ENCODE measurements at regions of chr14 and their contacts with region 1.

Region 1: DNA sequence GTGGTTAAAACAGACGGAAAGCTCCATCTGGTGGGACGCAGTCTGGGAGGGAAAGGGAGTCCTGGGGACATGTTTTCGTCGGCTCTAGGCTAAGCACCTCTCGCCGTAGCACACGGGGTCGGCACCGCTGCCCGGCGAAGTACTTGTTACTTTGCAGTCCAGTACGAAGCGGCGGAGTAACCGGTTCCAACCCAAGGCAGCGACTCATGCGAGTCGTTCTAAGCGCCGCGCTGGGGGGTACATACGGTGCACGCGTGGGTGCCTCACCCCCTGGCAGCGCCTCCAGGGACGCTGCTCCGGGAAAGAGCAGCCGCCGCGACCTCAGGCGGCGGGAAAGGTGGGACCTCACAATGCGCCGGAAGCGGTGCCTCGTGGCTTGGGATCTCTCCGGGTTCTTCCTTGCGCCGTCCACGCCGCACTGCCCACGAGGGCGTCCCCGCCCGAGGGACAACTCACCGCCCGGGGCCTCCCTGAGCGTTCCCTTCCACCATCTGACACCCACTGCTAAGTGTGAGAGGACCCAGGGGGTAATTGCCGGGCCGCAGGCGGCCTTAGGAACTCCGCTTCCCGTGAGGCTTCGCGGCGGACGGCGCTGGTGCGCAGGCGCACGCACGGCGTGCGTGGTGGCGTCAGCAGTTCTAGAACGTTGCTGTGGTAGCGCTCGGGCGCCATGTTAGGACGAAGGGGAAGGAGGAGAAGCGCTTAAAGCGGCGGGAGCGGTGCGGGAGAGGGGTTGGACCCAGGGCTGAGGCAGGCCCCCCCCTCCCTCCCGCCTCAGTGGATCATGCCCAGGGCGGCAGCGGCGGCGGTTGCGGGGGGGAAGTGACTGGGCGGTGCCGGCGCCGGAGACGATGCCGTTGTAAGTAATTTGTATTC is at the start of gene PAPOLA:
- DNase-seq: peak; percentile 88 to 94
- ATAC-seq: peak; percentile 94
- H3K4me3 ChIP-seq: peak within 1 kb of the TSS; percentile 91 to 99 (median 98)
- H3K27ac ChIP-seq: peak within 1 kb of the TSS; percentile 97 to 99 (median 98)
- H3K4me1 ChIP-seq: peaks cover 39 to 44% of the 10 kb centered on the region in 2 donors
- H3K27me3 ChIP-seq: no peaks in the 10 kb centered on the region
- CTCF ChIP-seq: peak in 3 of 5 experiments; percentile 5 to 37 (median 23)
- POLR2A ChIP-seq: peak; percentile 75 to 87
- total RNA-seq, gene PAPOLA: 41.5 to 66.4 (median 50.7) TPM

Region 2: GRCh38 chr14:96391293-96392118 is 110.5 kb before region 1 on chr14:
- in situ Hi-C with region 1: no loop called
- intact Hi-C with region 1: loop called (anchors 2 kb)
- DNase-seq: peak; percentile 96
- ATAC-seq: peak; percentile 90 to 92
- H3K4me3 ChIP-seq: peak overlapping the region; percentile 73 to 98 (median 87)
- H3K27ac ChIP-seq: peak overlapping the region; percentile 62 to 70 (median 66)
- H3K4me1 ChIP-seq: peaks cover 0 to 11% of the 10 kb centered on the region in 2 donors
- H3K27me3 ChIP-seq: no peaks in the 10 kb centered on the region
- CTCF ChIP-seq: peak in 1 of 5 experiments; percentile 17
- POLR2A ChIP-seq: no peak

Measured in gastrocnemius medialis (tissue), 4 donors.